ENCODE measurements at regions of chrX and their contacts with region 1.

Region 1: DNA sequence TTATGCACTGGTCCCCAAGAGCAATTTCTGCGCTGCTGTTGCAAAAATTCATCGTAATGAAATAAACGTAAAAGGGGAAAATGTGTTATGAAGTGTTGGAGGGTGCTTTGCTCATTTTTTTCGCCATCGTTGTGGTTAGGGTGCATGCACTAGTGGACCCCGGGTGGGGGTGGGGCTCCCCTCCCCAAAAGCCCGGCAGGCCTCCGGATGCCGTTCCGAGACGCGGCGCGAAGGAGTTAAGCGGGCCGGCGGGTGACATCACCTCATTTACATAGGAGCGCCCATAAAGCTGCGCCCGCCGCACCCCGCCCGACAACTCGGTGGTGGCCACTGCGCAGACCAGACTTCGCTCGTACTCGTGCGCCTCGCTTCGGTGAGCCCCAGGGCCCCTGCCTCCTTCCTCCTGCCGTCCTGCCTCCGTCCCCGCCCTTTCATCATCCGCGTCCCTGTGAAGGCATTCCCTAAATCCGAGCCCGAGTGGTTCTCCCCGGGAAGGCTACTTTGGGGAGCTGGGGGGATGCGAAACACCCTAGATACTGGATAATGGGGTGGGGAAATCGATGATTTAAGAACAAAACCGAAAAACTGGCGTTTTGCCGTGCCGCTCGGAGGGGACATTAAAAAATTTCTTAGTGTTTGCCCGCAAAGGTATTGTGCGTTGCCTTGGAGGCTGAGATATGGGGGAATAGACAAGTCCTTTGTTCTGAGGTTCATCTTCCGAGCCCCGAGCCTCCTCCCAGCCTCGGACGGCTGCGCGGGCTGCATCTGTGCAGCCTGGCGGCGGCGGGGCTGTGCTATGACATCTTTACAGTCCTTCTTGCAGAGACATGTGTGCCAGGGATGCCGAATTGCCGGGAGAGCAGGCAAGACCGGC is at the start of gene TMSB4X:
- DNase-seq: peak; percentile 81 to 85 (median 83)
- H3K4me3 ChIP-seq: peak within 1 kb of the TSS; percentile 84 to 85
- H3K4me3 Mint-ChIP-seq: peak within 1 kb of the TSS; percentile 92 to 99 (median 98)
- H3K27ac ChIP-seq: peak within 1 kb of the TSS; percentile 84
- H3K27ac Mint-ChIP-seq: peak within 1 kb of the TSS; percentile 89 to 99 (median 97)
- H3K4me1 ChIP-seq: peaks cover 26% of the 10 kb centered on the region
- H3K4me1 Mint-ChIP-seq: peaks cover 16 to 57% (median 38%) of the 10 kb centered on the region in 4 donors
- H3K27me3 ChIP-seq: no peaks in the 10 kb centered on the region
- H3K27me3 Mint-ChIP-seq: no peaks in the 10 kb centered on the region
- total RNA-seq, gene TMSB4X: 4,851 to 5,116 TPM

Region 2: GRCh38 chrX:12955882-12956703 is 18.9 kb before region 1 on chrX:
- CTCF ChIA-PET with region 1: interaction called, 108 read pairs
- POLR2A ChIA-PET with region 1: interaction called, 1,441 read pairs
- intact Hi-C with region 1: loop called (anchors 1 kb)
- DNase-seq: peak; percentile 52 to 84 (median 65)
- H3K4me3 ChIP-seq: peak overlapping the region; percentile 23 to 51
- H3K4me3 Mint-ChIP-seq: peak overlapping the region; percentile 80 to 92 (median 86)
- H3K27ac ChIP-seq: peak overlapping the region; percentile 88
- H3K27ac Mint-ChIP-seq: peak overlapping the region; percentile 94 to 99 (median 97)
- H3K4me1 ChIP-seq: peaks cover 96% of the 10 kb centered on the region
- H3K4me1 Mint-ChIP-seq: peaks cover 42 to 90% (median 73%) of the 10 kb centered on the region in 4 donors
- H3K27me3 ChIP-seq: no peaks in the 10 kb centered on the region
- H3K27me3 Mint-ChIP-seq: no peaks in the 10 kb centered on the region

Region 3: DNA sequence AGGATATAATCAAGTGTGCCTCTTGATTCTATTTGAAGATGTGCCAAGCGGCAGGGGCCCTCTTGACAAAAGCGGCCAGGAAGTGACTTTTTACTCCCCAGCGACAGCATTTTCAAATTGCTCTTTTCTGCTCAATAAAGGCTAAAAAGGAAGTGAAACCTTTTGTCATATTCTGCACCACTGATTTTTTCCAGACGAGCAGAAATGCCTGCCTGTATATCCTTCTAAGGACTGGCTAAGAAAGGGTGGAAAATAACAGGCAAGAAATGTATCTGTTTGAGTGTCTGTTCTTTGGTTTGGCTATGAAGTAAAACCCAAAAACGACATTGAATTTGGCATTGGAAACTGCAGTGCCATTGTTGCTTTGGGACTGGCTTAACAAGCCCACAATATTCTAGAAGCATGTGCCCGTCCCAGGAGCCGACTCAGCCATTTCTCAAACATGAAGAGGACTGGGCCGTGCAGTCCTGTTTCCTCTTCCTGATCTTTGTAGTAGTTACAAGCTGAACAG is 25.3 kb after region 1 on chrX:
- CTCF ChIA-PET with region 1: interaction called, 6 read pairs
- POLR2A ChIA-PET with region 1: interaction called, 426 read pairs
- intact Hi-C with region 1: loop called (anchors 1 kb)
- DNase-seq: peak; percentile 55 to 68 (median 59)
- H3K4me3 ChIP-seq: no peak overlapping the region
- H3K4me3 Mint-ChIP-seq: peak overlapping the region; percentile 71 to 88 (median 78)
- H3K27ac ChIP-seq: peak overlapping the region; percentile 72
- H3K27ac Mint-ChIP-seq: peak overlapping the region; percentile 91 to 98 (median 94)
- H3K4me1 ChIP-seq: peaks cover 91% of the 10 kb centered on the region
- H3K4me1 Mint-ChIP-seq: peaks cover 45 to 84% (median 69%) of the 10 kb centered on the region in 4 donors
- H3K27me3 ChIP-seq: no peaks in the 10 kb centered on the region
- H3K27me3 Mint-ChIP-seq: no peaks in the 10 kb centered on the region

Region 4: GRCh38 chrX:13029341-13029740 is 54.3 kb after region 1 on chrX:
- CTCF ChIA-PET with region 1: interaction called, 6 read pairs
- POLR2A ChIA-PET with region 1: interaction called, 218 read pairs
- intact Hi-C with region 1: no loop called
- DNase-seq: no peak
- H3K4me3 ChIP-seq: no peak overlapping the region
- H3K4me3 Mint-ChIP-seq: peak overlapping the region; percentile 33 to 79 (median 65)
- H3K27ac ChIP-seq: peak overlapping the region; percentile 42
- H3K27ac Mint-ChIP-seq: peak overlapping the region; percentile 74 to 94 (median 90)
- H3K4me1 ChIP-seq: peaks cover 72% of the 10 kb centered on the region
- H3K4me1 Mint-ChIP-seq: peaks cover 45 to 76% (median 61%) of the 10 kb centered on the region in 4 donors
- H3K27me3 ChIP-seq: no peaks in the 10 kb centered on the region
- H3K27me3 Mint-ChIP-seq: no peaks in the 10 kb centered on the region

Region 5: DNA sequence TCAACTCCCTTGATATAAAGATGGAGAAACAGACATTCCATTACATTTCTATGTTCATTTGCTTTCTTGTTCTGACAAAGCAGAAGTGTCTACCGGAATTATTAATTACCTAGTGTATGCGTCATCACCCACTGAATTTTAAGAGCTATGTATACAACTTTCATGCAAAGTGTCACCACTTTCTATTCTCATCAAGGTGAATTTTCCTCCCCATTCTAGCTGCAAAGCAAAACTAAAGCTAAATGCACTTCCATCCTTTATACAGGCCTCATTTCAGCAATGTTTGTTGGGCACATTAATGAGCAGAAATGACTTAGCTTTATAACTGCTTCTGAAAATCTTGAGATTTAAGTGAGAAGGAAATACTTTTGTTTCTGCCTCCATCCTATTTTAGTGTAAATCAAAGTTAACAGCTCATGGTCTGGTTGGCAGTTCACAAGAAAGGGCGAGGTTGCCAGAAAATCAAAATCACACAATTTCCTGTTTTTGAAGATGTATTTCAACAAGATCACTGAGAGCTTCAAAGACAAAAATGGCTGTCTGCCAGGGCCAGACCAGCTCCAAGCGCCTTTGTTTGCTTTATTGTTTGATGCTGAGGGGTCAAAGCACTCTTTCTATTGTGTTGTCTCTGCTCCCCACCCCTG is 76.6 kb after region 1 on chrX:
- CTCF ChIA-PET with region 1: interaction called, 6 read pairs
- POLR2A ChIA-PET with region 1: interaction called, 220 read pairs
- intact Hi-C with region 1: no loop called
- DNase-seq: peak; percentile 61 to 71 (median 70)
- H3K4me3 ChIP-seq: no peak overlapping the region
- H3K4me3 Mint-ChIP-seq: peak overlapping the region in 7 of 8 donors; percentile 10 to 80 (median 52)
- H3K27ac ChIP-seq: peak overlapping the region; percentile 42
- H3K27ac Mint-ChIP-seq: peak overlapping the region; percentile 85 to 97 (median 95)
- H3K4me1 ChIP-seq: peaks cover 88% of the 10 kb centered on the region
- H3K4me1 Mint-ChIP-seq: peaks cover 47 to 87% (median 65%) of the 10 kb centered on the region in 4 donors
- H3K27me3 ChIP-seq: no peaks in the 10 kb centered on the region
- H3K27me3 Mint-ChIP-seq: no peaks in the 10 kb centered on the region

Region 6: GRCh38 chrX:13151828-13152510 is 176.9 kb after region 1 on chrX:
- CTCF ChIA-PET with region 1: no interaction called
- POLR2A ChIA-PET with region 1: interaction called, 13 read pairs
- intact Hi-C with region 1: no loop called
- DNase-seq: peak; percentile 76 to 89 (median 84)
- H3K4me3 ChIP-seq: no peak overlapping the region
- H3K4me3 Mint-ChIP-seq: peak overlapping the region; percentile 32 to 73 (median 58)
- H3K27ac ChIP-seq: peak overlapping the region; percentile 51
- H3K27ac Mint-ChIP-seq: peak overlapping the region; percentile 88 to 97 (median 94)
- H3K4me1 ChIP-seq: peaks cover 22% of the 10 kb centered on the region
- H3K4me1 Mint-ChIP-seq: peaks cover 10 to 34% (median 17%) of the 10 kb centered on the region in 4 donors
- H3K27me3 ChIP-seq: no peaks in the 10 kb centered on the region
- H3K27me3 Mint-ChIP-seq: no peaks in the 10 kb centered on the region

Region 7: GRCh38 chrX:13734278-13735172 is 759.5 kb after region 1 on chrX and contains the starts of genes OFD1 and TRAPPC2:
- CTCF ChIA-PET with region 1: no interaction called
- POLR2A ChIA-PET with region 1: interaction called, 10 read pairs
- intact Hi-C with region 1: no loop called
- DNase-seq: peak; percentile 91 to 93 (median 93)
- H3K4me3 ChIP-seq: peak within 1 kb of the TSS; percentile 49 to 84
- H3K4me3 Mint-ChIP-seq: peak within 1 kb of the TSS; percentile 91 to 99 (median 98)
- H3K27ac ChIP-seq: peak within 1 kb of the TSS; percentile 93
- H3K27ac Mint-ChIP-seq: peak within 1 kb of the TSS; percentile 96 to 100 (median 99)
- H3K4me1 ChIP-seq: peaks cover 59% of the 10 kb centered on the region
- H3K4me1 Mint-ChIP-seq: peaks cover 35 to 67% (median 51%) of the 10 kb centered on the region in 4 donors
- H3K27me3 ChIP-seq: no peaks in the 10 kb centered on the region
- H3K27me3 Mint-ChIP-seq: no peaks in the 10 kb centered on the region
- total RNA-seq, gene OFD1: 135 TPM
- total RNA-seq, gene TRAPPC2: 36.6 to 39.6 TPM

Measured in CD4-positive, alpha-beta memory T cell (primary cell).